GM10248 (cell line): ENCODE measurements at regions of chr2 and their contacts with region 1.

Region 1: DNA sequence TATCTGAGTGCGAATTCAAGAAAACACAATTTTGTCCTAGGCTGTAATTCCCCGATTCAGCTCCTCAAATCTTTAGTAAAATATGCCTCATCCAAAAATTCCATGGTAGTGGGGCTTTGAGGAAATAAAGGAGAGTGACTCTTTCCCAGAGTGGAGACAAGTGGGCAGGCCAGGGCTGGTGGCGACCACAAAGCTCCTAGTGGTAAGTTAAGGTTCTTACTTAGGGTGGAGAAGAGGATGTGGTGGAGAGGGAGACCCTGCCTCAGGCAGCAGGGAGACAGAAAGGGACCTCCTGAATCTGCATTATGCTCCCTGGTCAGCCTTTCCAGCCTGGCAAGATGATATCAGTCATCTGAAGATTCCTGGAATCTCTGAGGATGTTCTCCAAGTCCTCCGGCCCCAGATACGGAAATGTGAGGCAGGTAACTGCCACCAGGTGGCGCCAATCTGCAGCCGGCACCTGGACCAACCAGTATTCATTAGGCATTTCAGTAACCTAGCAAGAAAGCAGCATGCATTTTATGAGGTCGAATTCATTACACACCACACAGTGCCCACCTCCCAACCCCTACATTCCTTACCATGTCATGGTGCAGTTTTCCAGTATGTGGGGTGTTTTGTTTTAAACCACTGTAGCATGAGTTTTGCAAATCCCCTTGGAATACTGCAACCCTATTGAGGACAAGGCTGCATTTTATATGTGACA is 106.4 kb downstream of the POLE4 start:
- DNase-seq: peak; percentile 62
- CTCF ChIP-seq: peak; percentile 76

Region 2: GRCh38 chr2:74364533-74365505 is 700.0 kb before region 1 on chr2:
- CTCF ChIA-PET with region 1: no interaction called
- POLR2A ChIA-PET with region 1: no interaction called
- DNase-seq: no peak
- CTCF ChIP-seq: no peak

Region 3: DNA sequence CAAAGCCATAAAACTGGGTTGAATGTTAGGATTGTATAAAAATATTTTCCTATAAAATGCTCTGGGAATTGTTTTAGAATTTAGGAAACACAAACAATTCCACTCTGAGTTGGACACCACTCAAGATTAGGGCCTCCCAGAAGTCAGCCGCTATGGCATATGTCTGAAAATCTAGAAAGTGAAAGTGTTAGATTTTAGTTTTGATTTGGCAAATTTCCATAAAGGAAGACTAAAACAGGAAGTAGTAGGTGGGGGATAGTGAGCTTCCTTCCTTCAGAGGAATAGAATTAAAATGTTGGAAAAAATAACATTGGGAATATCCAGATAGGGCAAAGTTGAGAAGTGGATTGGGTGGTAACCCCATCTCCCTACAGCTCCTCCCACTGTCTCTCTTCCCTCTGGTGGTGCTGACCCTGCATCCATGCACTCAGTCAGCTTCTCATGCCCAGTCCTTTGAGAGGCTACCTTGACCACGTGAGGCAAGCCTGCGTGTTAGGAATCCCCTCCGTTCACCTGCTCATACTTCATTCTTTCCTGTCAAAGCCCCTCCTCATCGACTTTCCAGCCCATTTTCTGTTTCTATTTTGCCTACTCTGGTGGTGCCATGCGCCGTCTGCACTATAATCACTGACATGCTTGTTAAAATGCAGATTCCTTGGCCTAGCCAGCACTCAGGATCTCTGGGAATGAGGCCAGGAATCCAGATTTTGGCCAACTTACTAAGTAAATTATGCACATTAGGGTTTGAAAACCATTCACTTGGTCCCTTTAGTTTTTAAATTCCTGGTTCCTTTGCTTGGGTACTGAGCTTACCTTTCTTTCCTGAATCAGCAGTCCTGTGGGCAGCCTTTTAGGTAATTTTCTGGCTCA is 22.9 kb before region 1 on chr2:
- CTCF ChIA-PET with region 1: interaction called, 14 read pairs
- POLR2A ChIA-PET with region 1: no interaction called
- DNase-seq: no peak
- CTCF ChIP-seq: no peak

Region 4: GRCh38 chr2:75047992-75048625 is 16.7 kb before region 1 on chr2:
- CTCF ChIA-PET with region 1: interaction called, 73 read pairs
- POLR2A ChIA-PET with region 1: no interaction called
- DNase-seq: no peak
- CTCF ChIP-seq: no peak

Region 5: GRCh38 chr2:75053484-75054112 is 11.2 kb before region 1 on chr2:
- CTCF ChIA-PET with region 1: interaction called, 73 read pairs
- POLR2A ChIA-PET with region 1: no interaction called
- DNase-seq: peak; percentile 64
- CTCF ChIP-seq: peak; percentile 82

Region 6: GRCh38 chr2:75076088-75076487 is 11.2 kb after region 1 on chr2:
- CTCF ChIA-PET with region 1: interaction called, 61 read pairs
- POLR2A ChIA-PET with region 1: no interaction called
- DNase-seq: no peak
- CTCF ChIP-seq: no peak

Region 7: GRCh38 chr2:75100011-75100800 is 35.4 kb after region 1 on chr2:
- CTCF ChIA-PET with region 1: interaction called, 11 read pairs
- POLR2A ChIA-PET with region 1: no interaction called
- DNase-seq: no peak
- CTCF ChIP-seq: no peak

Region 8: DNA sequence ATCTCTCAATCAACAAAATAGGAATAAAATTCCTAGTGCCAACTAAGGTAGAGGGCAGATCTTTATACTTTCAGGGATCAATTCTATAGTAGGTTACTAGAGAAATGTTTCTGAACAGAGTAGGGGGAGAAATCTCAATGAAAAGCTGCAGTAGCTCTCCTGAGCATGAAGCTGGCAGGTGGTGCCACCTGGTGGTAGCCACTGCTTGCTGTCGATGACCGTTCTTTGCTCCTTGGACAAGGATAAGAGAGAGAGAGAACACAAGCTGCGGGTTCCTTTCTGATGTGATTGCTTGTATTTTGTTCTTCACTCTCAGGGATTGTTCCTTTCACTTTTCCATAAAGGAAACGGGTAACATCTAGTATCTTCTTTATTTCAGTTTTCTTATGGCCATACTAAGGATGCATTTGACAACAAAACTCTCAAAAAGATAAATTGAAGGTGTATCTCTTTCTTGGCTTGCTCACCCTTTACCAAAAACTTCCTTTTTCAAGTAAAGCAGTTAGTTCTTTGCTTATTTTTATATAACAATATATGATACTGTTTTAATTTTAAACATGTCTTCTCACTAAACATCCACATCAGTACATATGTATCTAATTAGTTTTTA is 563.2 kb after region 1 on chr2:
- CTCF ChIA-PET with region 1: interaction called, 12 read pairs
- POLR2A ChIA-PET with region 1: no interaction called
- DNase-seq: peak; percentile 68
- CTCF ChIP-seq: peak; percentile 95